Heart right ventricle (tissue), 16 donors: ENCODE measurements at regions of chr18 and their contacts with region 1.

Region 1: GRCh38 chr18:48959921-48960920 is 9.5 kb upstream of the SMAD7 start:
- DNase-seq: no peak
- ATAC-seq: no peak
- H3K4me3 ChIP-seq: no peak overlapping the region
- H3K27ac ChIP-seq: no peak overlapping the region
- H3K4me1 ChIP-seq: peaks cover 2 to 29% (median 21%) of the 10 kb centered on the region in 9 donors
- H3K27me3 ChIP-seq: no peaks in the 10 kb centered on the region
- CTCF ChIP-seq: no peak

Region 2: DNA sequence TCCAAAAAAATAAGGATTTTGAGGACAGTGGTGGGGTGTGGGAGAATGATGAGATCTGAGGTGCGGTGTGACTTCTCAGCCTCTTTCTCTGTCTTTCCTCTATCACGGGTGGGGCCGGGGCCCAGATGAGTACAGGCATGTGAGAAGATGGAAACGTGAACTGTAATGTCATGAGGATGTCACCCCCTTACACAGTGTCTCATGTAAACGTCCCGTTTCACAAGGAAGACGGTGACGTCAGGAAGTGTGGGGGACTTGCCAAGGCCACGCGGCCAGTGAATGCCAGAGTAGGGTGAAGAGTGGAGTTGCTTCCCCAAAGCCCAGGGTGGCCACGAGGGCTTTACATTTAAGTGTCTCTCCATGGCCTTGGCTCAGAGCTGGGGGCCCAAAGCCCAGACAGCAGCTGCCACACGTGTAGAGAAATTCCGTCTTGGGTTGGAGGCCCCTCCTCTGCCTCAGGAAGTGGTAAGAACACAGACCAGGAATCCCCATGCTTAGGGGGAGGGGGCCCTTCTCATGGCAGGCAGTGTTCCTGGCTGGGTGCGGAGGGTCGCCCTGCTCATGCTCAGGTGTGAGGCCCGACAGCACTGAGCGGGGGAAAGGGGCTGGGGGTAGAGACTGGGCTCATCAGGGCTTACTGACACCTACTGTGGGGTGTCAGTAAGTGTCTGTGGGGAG is 71.4 kb after region 1 on chr18:
- intact Hi-C with region 1: loop called in 1 of 10 experiments (anchors 10 kb)
- DNase-seq: no peak
- ATAC-seq: peak in 3 of 8 donors; percentile 37 to 44 (median 39)
- H3K4me3 ChIP-seq: no peak overlapping the region
- H3K27ac ChIP-seq: no peak overlapping the region
- H3K4me1 ChIP-seq: peaks cover 0 to 3% (median 0%) of the 10 kb centered on the region in 9 donors
- H3K27me3 ChIP-seq: no peaks in the 10 kb centered on the region
- CTCF ChIP-seq: no peak